Panc1 (cell line): ENCODE measurements at regions of chr2 and their contacts with region 1.

Region 1: DNA sequence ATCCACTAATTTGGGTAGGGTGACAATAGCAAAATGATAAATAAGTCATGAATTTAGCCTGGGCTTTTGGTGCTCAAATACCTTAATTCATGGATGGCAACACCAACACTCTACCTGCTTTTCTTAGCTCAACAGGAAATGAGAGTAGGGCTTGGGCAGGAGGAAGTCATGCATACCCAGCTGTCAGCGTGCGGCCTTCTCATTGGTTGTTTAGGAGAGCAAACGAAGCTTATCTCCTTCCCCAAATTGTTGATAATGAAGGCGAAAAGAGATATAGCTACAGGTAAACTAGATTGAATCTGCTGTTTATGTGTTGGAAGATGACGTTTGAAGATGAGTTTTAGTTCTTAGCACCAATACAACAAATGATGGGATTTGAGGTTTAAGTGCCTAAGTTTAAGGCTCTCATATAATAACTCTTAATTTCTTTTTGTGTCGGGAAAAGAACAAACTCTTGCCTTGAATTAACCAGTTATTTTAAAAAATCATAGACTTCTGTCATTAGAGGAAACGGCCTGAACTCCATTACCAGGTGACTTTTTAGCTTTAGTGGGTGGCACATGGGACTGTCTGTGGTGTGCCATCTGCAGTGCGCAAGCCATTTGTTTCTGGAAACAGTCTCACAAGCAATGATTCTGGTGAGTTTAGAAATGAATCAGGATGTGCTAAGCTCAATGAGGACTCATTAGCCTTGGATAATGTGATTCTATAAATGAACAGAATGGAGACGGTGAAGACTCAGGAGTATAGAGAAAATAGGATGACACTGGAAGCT is 19.8 kb downstream of the MAP4K4 start:
- DNase-seq: no peak
- ATAC-seq: no peak
- H3K4me3 ChIP-seq: no peak overlapping the region
- H3K27ac ChIP-seq: no peak overlapping the region
- H3K4me1 ChIP-seq: no peaks in the 10 kb centered on the region
- H3K27me3 ChIP-seq: no peaks in the 10 kb centered on the region
- CTCF ChIP-seq: no peak

Region 2: GRCh38 chr2:101566632-101567228 is 150.5 kb before region 1 on chr2:
- CTCF ChIA-PET with region 1: no interaction called
- POLR2A ChIA-PET with region 1: no interaction called
- in situ Hi-C with region 1: no loop called
- intact Hi-C with region 1: no loop called
- DNase-seq: no peak
- ATAC-seq: peak; percentile 83
- H3K4me3 ChIP-seq: no peak overlapping the region
- H3K27ac ChIP-seq: no peak overlapping the region
- H3K4me1 ChIP-seq: peaks cover 13% of the 10 kb centered on the region
- H3K27me3 ChIP-seq: peaks cover 11% of the 10 kb centered on the region
- CTCF ChIP-seq: no peak

Region 3: GRCh38 chr2:101751875-101752619 is 34.8 kb after region 1 on chr2:
- CTCF ChIA-PET with region 1: no interaction called
- POLR2A ChIA-PET with region 1: no interaction called
- in situ Hi-C with region 1: loop called (anchors 5 kb)
- intact Hi-C with region 1: no loop called
- DNase-seq: no peak
- ATAC-seq: peak; percentile 52
- H3K4me3 ChIP-seq: peak overlapping the region in 1 of 2 experiments; percentile 23; a peak in 1 of 4 replicates
- H3K27ac ChIP-seq: peak overlapping the region; percentile 72
- H3K4me1 ChIP-seq: peaks cover 52% of the 10 kb centered on the region
- H3K27me3 ChIP-seq: no peaks in the 10 kb centered on the region
- CTCF ChIP-seq: no peak

Region 4: DNA sequence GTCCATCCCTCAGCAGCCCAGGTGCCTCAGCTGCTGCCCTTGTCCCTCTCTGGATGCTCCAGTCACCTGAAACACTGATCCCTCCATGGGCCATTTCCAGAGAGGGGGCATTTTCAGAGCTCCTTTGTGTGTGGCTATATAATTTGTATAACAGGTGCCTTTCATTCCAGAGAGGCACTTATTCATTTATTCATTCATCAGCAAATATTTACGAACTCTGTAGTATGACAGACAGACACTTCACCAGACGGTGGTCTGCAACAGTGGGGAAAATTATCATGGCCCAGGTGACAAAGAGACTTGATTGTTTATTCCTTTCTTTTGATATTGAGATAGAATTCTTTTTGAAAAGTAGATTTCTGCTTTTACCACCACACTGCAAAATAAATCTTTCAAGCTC is 1406.3 kb after region 1 on chr2:
- CTCF ChIA-PET with region 1: no interaction called
- POLR2A ChIA-PET with region 1: no interaction called
- in situ Hi-C with region 1: no loop called
- intact Hi-C with region 1: no loop called
- DNase-seq: no peak
- ATAC-seq: no peak
- H3K4me3 ChIP-seq: no peak overlapping the region
- H3K27ac ChIP-seq: no peak overlapping the region
- H3K4me1 ChIP-seq: no peaks in the 10 kb centered on the region
- H3K27me3 ChIP-seq: no peaks in the 10 kb centered on the region
- CTCF ChIP-seq: no peak